PC-9 (cell line): ENCODE measurements at regions of chr12 and their contacts with region 1.

Region 1: DNA sequence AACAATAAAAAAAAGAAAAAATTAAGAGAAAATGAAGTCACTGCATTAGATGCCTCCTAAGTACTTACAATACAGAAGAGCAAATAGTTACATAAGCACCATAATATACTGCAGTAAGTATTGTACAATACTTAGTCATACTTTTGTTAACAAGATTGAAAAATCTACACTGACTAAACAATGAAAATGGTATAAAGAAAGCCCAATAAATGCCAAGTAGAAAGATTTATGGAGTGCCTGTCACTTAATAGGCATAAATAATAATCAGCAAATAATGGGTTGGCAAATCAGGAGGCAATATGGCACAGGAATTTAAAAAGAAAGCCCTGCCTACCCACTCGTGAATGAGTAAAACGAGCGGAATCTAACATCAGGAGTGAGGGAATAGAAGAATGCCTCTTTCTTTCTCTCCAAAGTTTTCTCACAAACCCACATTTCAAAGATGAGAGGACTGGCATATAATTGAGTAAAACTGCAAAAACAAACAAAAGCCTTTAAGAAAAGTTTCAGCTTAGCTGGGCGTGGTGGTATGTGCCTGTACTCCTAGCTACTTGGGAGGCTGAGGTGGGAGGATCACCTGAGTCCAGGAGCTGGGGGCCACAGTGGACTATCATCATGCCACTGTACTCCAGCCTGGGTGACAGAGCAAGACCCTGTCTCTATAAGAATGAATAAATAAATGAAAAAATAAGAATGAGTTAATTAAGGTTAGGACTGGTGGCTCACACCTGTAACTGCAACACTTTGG is 36.1 kb downstream of the CRY1 start:
- DNase-seq: peak; percentile 6 to 94
- H3K4me3 ChIP-seq: no peak overlapping the region
- H3K27ac ChIP-seq: peak overlapping the region; percentile 69
- H3K4me1 ChIP-seq: peaks cover 14% of the 10 kb centered on the region
- H3K27me3 ChIP-seq: no peaks in the 10 kb centered on the region
- CTCF ChIP-seq: peak; percentile 40; the same call in 1 of the 2 replicates

Region 2: DNA sequence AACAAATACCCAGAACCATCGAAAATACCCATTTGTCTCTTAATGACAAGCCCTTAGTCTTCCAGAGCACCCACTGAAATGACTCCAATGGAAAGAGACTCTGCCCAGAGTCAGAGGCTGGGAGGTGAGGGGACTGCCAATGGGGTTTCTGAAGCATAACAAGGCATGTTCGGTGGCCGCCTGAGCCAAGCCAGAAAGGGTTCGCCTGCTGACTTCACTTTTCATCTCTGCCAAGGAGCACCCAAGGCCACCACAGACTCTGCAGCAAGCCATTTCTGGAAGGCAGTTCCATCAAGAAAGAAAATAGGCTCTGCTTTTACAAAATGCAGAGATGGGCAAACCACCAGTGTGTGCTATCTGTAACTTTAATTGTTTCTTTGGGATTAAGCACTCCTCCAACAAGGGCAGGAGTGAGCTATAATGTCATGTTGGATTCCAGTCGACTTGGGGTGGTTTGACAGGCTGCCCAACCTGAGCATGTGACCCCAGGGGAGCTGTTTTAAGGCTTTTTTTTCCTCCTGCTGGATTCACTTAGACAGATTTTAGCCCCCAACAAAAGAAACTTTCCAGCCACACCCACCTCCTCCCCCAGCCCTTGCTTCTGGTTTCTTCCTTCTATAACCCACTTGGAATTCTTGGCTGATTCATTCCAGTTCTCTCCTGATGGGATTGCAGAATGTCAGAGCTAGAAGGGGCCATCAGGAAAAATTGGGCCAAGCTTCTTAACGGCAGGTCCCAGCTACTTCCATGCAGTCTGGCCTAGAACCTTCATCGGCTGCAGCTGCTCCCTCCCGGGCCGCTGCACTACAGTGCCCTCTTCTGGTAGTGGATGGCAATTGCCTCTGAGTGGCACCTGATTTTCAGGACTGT is 833.5 kb before region 1 on chr12:
- CTCF ChIA-PET with region 1: no interaction called
- POLR2A ChIA-PET with region 1: no interaction called
- intact Hi-C with region 1: no loop called
- DNase-seq: peak in 1 of 2 experiments; percentile 70
- H3K4me3 ChIP-seq: no peak overlapping the region
- H3K27ac ChIP-seq: no peak overlapping the region
- H3K4me1 ChIP-seq: peaks cover 7% of the 10 kb centered on the region
- H3K27me3 ChIP-seq: no peaks in the 10 kb centered on the region
- CTCF ChIP-seq: peak; percentile 93

Region 3: GRCh38 chr12:108679106-108679681 is 1621.9 kb after region 1 on chr12:
- CTCF ChIA-PET with region 1: interaction called, 17 read pairs
- POLR2A ChIA-PET with region 1: no interaction called
- intact Hi-C with region 1: no loop called
- DNase-seq: no peak
- H3K4me3 ChIP-seq: no peak overlapping the region
- H3K27ac ChIP-seq: no peak overlapping the region
- H3K4me1 ChIP-seq: no peaks in the 10 kb centered on the region
- H3K27me3 ChIP-seq: no peaks in the 10 kb centered on the region
- CTCF ChIP-seq: no peak